ENCODE measurements at regions of chr12 and their contacts with region 1.

Region 1: GRCh38 chr12:751192-751998 is 984 bp upstream of the WNK1 start:
- DNase-seq: peak; percentile 64 to 96
- H3K4me3 ChIP-seq: peak overlapping the region; percentile 83 to 90
- H3K27ac ChIP-seq: peak overlapping the region; percentile 98 to 99
- H3K4me1 ChIP-seq: peaks cover 0 to 9% of the 10 kb centered on the region in 2 donors
- H3K27me3 ChIP-seq: no peaks in the 10 kb centered on the region
- CTCF ChIP-seq: peak; percentile 68 to 75 (median 69)

Region 2: DNA sequence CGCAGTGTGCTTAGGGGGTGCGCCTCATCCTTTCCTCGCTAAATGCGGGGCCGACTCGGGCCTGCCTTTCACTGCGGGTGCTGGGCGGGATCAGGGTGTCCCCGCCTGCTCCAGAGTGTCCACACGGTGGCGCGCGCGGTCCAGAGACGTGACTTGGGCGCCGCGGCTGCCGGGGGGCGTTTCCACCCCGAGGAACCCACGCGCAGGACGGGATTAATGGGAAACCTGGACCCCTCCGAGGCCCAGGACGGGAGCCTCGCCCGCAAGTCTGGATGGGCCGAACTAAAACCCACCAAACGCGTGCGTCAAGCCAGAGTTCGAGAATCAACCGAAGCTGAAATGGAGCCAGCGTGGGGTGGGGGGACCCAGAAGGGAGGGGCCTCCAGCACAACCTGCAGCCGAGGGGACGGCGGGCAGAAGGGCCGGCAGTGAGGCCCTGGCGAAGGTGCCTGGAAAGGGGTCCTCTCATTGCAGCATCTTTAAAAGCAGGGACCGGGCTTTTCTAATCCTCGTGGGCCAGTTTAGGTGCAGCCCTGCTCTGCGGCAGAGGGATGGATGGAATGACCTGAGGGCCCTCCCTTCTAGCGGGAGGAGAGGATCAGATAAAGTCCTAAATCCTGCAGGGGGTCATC is 181.5 kb before region 1 on chr12:
- intact Hi-C with region 1: loop called (anchors 1 kb)
- DNase-seq: peak in 1 of 2 donors; percentile 95
- H3K4me3 ChIP-seq: peak overlapping the region; percentile 68 to 77
- H3K27ac ChIP-seq: peak overlapping the region; percentile 93 to 97
- H3K4me1 ChIP-seq: peaks cover 7 to 21% of the 10 kb centered on the region in 2 donors
- H3K27me3 ChIP-seq: no peaks in the 10 kb centered on the region
- CTCF ChIP-seq: peak; percentile 94 to 95 (median 94)

Region 3: GRCh38 chr12:630656-631632 is 120.5 kb before region 1 on chr12:
- intact Hi-C with region 1: loop called (anchors 2 kb)
- DNase-seq: peak in 1 of 2 donors; percentile 83
- H3K4me3 ChIP-seq: peak overlapping the region; percentile 16 to 22
- H3K27ac ChIP-seq: peak overlapping the region; percentile 80 to 84
- H3K4me1 ChIP-seq: peaks cover 0 to 37% of the 10 kb centered on the region in 2 donors
- H3K27me3 ChIP-seq: no peaks in the 10 kb centered on the region
- CTCF ChIP-seq: no peak

Region 4: GRCh38 chr12:810671-811415 is 59.4 kb after region 1 on chr12:
- intact Hi-C with region 1: loop called (anchors 2 kb)
- DNase-seq: no peak
- H3K4me3 ChIP-seq: no peak overlapping the region
- H3K27ac ChIP-seq: no peak overlapping the region
- H3K4me1 ChIP-seq: peaks cover 2 to 28% of the 10 kb centered on the region in 2 donors
- H3K27me3 ChIP-seq: no peaks in the 10 kb centered on the region
- CTCF ChIP-seq: no peak

Region 5: GRCh38 chr12:990661-991349 is 239.4 kb after region 1 on chr12 and contains the start of gene ERC1:
- intact Hi-C with region 1: loop called (anchors 5 kb)
- DNase-seq: peak; percentile 55 to 93
- H3K4me3 ChIP-seq: peak within 1 kb of the TSS; percentile 90 to 94
- H3K27ac ChIP-seq: peak within 1 kb of the TSS; percentile 98
- H3K4me1 ChIP-seq: peaks cover 0 to 18% of the 10 kb centered on the region in 2 donors
- H3K27me3 ChIP-seq: no peaks in the 10 kb centered on the region
- CTCF ChIP-seq: peak in 2 of 3 experiments; percentile 3 to 6
- total RNA-seq, gene ERC1: 41.4 TPM